Colonic mucosa (tissue), 4 donors: ENCODE measurements at regions of chr1 and their contacts with region 1.

Region 1: GRCh38 chr1:151443846-151444782 is 15.2 kb downstream of the POGZ start:
- DNase-seq: peak; percentile 79
- H3K4me3 ChIP-seq: no peak overlapping the region
- H3K27ac ChIP-seq: no peak overlapping the region
- H3K4me1 ChIP-seq: no peaks in the 10 kb centered on the region
- H3K27me3 ChIP-seq: no peaks in the 10 kb centered on the region
- CTCF ChIP-seq: peak; percentile 77

Region 2: DNA sequence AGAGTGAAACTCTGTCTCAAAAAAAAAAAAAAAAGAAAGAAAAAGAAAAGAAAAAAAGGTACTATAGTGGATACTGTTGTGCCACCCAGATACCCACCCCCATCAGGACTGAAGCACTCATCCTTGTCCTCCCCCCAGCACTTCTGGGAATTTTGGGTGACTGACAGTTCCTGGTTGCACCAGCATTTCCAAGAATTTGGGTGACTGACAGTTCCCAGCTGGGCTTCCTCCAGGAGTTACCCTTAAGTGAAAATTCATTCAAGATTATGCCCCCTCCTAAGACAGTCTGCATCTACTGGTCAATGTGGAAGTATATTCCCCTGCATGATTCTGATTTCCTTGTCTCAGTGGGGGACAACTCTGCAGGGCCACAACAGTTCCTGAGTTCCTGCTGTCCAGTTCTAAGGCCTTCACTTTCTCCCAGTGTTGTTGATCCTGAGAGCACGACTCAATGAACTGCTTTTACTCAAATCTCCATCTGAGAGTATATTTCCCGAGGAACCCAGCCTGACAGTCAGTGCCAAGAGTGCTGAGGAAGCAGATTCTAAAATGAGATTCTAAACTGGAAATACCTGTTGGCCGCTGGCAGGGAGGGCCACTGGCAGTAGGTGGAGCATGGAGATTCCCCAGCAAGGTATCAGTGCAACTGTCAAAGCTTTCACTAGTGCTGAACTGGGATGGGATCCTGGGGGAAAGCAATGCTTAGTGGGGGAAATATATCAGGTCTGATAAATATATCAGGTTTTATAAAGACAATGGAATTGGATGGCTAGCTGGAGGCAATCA is 295.7 kb after region 1 on chr1:
- intact Hi-C with region 1: loop called (anchors 10 kb)
- DNase-seq: no peak
- H3K4me3 ChIP-seq: no peak overlapping the region
- H3K27ac ChIP-seq: no peak overlapping the region
- H3K4me1 ChIP-seq: no peaks in the 10 kb centered on the region
- H3K27me3 ChIP-seq: no peaks in the 10 kb centered on the region
- CTCF ChIP-seq: no peak

Region 3: GRCh38 chr1:151790071-151790940 is 346.2 kb after region 1 on chr1 and contains the start of gene TDRKH:
- intact Hi-C with region 1: no loop called
- DNase-seq: peak; percentile 98
- H3K4me3 ChIP-seq: peak within 1 kb of the TSS; percentile 65
- H3K27ac ChIP-seq: peak within 1 kb of the TSS; percentile 61
- H3K4me1 ChIP-seq: no peaks in the 10 kb centered on the region
- H3K27me3 ChIP-seq: no peaks in the 10 kb centered on the region
- CTCF ChIP-seq: peak; percentile 12
- total RNA-seq, gene TDRKH: 6.8 to 9.1 TPM